Natural killer cell (primary cell): ENCODE measurements at regions of chr12 and their contacts with region 1.

Region 1: DNA sequence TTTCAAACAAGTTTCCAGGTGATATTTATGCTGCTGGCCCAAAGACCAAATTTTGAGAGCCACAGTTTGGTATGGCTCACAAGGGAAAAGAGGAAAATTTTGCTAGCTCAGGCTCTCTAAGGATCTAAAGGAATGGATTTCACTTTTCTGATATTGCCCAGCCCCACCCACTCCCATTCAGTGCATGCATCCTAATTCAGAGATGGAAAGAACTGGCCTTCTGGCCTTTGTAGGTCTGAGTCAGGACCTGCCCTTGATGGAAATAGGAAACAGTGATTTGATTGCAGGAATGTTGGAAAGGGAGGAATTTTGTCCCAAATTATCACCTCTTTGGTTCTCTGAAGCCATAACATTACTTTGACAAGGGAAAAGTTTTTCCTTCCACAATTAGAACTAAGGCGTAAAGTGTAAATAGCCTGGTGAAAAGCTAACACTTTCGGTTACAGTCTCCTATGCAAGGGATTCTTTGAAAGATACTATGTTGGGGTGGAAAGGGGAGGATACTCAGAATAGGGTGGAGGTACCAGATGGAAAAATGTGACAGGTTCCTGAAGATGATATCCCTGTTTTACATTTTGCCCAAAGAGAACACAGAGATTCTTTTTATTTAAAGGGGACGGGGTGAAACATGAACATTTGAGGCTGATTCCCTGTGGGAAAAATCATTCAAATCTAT is 11.1 kb downstream of the ZNF641 start:
- DNase-seq: no peak
- ATAC-seq: no peak
- H3K4me3 ChIP-seq: no peak overlapping the region
- H3K4me3 Mint-ChIP-seq: no peak overlapping the region
- H3K27ac ChIP-seq: no peak overlapping the region
- H3K27ac Mint-ChIP-seq: peak overlapping the region; percentile 27 to 76
- H3K4me1 ChIP-seq: peaks cover 4% of the 10 kb centered on the region
- H3K4me1 Mint-ChIP-seq: peaks cover 47 to 51% of the 10 kb centered on the region in 2 donors
- H3K27me3 ChIP-seq: no peaks in the 10 kb centered on the region
- H3K27me3 Mint-ChIP-seq: no peaks in the 10 kb centered on the region
- CTCF ChIP-seq: no peak

Region 2: DNA sequence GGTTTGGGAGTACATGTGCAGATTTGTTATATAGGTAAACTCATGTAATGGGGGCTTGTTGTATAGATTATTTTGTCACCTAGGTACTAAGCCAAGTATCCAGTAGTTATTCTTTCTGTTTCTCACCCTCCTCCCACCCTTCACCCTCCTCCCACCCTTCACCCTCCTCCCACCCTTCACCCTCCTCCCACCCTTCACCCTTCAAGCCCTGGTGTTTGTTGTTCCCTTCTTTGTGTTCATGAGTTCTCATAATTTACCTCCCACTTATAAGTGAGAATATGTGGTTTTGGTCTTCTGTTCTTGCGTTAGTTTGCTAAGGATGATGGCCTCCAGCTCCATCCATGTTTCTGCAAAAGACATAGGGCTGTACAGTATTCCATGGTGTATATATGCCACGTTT is 77.8 kb before region 1 on chr12:
- intact Hi-C with region 1: loop called (anchors 2 kb)
- DNase-seq: no peak
- ATAC-seq: no peak
- H3K4me3 ChIP-seq: no peak overlapping the region
- H3K4me3 Mint-ChIP-seq: no peak overlapping the region
- H3K27ac ChIP-seq: no peak overlapping the region
- H3K27ac Mint-ChIP-seq: no peak overlapping the region
- H3K4me1 ChIP-seq: no peaks in the 10 kb centered on the region
- H3K4me1 Mint-ChIP-seq: peaks cover 0 to 5% of the 10 kb centered on the region in 2 donors
- H3K27me3 ChIP-seq: no peaks in the 10 kb centered on the region
- H3K27me3 Mint-ChIP-seq: peaks cover 15 to 35% of the 10 kb centered on the region in 2 donors
- CTCF ChIP-seq: no peak